Lower leg skin (tissue), 4 donors: ENCODE measurements at regions of chr22 and their contacts with region 1.

Region 1: DNA sequence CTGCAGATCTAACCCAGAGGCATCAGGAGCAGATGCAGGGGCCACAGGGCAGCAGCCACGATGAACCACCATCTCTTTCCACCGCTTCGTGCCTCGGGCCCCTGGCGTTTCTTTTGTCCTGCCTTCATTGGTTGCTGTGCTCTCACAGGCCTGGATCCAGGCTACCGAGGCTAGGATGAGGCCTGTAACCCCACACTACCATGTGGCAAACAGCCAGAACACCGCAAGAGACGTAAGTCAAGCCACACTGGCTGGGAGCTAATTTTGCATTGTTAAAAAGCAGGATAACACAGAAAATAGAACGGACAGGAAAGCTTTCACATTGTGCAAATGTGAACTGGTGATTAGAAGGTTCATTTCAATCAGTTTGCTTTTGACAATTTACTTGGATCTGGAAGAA is 15.7 kb upstream of the ARFGAP3 start:
- DNase-seq: no peak
- H3K4me3 ChIP-seq: no peak overlapping the region
- CTCF ChIP-seq: no peak
- POLR2A ChIP-seq: no peak

Region 2: GRCh38 chr22:42229455-42230149 is 643.2 kb before region 1 on chr22:
- intact Hi-C with region 1: loop called (anchors 5 kb)
- DNase-seq: no peak
- H3K4me3 ChIP-seq: no peak overlapping the region
- CTCF ChIP-seq: no peak
- POLR2A ChIP-seq: no peak

Region 3: GRCh38 chr22:42732081-42732480 is 140.7 kb before region 1 on chr22:
- intact Hi-C with region 1: no loop called
- DNase-seq: no peak
- H3K4me3 ChIP-seq: no peak overlapping the region
- CTCF ChIP-seq: no peak
- POLR2A ChIP-seq: no peak